HepG2 (cell line): ENCODE measurements at regions of chr6 and their contacts with region 1.

Region 1: GRCh38 chr6:25992413-25993037 is 29.9 kb downstream of the TRIM38 start:
- DNase-seq: peak; percentile 93
- ATAC-seq: peak; percentile 96
- H3K4me3 ChIP-seq: peak overlapping the region; percentile 81 to 88 (median 81)
- H3K27ac ChIP-seq: peak overlapping the region; percentile 90
- H3K4me1 ChIP-seq: peaks cover 25% of the 10 kb centered on the region
- H3K27me3 ChIP-seq: no peaks in the 10 kb centered on the region
- CTCF ChIP-seq: peak; percentile 96
- EP300 ChIP-seq: peak; percentile 50 to 79; a peak in 3 of 4 replicates
- POLR2A ChIP-seq: peak; percentile 81 to 96
- RAD21 ChIP-seq: peak; percentile 97

Region 2: DNA sequence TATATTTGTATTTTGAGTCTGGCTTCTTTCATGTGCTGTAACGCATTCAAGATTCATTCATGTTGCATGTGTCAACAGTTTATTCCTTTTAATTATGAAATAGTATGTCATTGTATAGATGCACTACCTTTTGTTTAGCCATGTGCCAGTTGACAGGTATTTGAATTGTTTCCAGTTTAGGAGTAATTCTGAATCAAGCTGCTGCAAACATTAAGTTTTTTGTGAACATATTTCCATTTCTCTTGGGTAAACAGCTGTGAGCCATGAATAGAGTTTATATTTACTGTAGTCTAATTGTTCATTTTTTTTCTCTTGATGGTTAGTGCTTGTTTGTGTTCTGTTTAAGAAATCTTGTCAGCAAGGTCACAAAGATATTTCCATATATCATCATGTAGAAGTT is 914.4 kb before region 1 on chr6:
- CTCF ChIA-PET with region 1: no interaction called
- POLR2A ChIA-PET with region 1: no interaction called
- in situ Hi-C with region 1: no loop called
- intact Hi-C with region 1: no loop called
- DNase-seq: no peak
- ATAC-seq: no peak
- H3K4me3 ChIP-seq: no peak overlapping the region
- H3K27ac ChIP-seq: no peak overlapping the region
- H3K4me1 ChIP-seq: peaks cover 14% of the 10 kb centered on the region
- H3K27me3 ChIP-seq: no peaks in the 10 kb centered on the region
- CTCF ChIP-seq: no peak
- EP300 ChIP-seq: no peak
- POLR2A ChIP-seq: no peak
- RAD21 ChIP-seq: no peak

Region 3: DNA sequence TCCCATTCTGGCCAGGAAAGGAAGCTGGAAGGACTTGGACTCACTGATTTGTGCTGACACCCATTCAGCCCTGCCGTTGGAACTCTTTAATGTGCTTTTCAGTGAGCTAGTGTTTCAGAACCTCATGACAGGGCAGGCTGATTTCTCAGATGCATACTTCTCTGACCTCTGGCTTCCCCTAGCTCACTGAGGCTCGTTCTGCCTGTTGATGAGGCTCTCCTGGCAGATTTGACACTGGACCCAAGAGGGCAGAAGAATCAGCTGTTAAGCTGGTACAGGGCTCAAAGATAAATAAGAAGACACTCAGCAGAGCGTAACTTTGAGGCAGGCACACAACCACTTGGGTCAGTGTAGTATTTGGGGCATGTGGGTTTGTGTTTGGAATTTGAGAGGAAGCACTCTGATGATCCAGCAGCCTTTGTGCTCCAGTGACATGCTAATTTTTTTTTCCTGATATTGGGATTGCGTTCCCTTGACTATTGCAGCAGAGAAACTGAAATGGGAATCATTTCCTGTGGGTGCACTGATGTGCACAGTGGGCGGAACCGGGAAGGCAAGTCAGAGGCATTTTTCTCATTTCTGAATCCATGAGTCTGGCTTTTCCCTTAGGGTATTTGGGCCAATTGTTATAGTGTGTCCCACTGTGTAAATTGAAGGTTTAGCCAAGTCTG is 633.2 kb before region 1 on chr6:
- CTCF ChIA-PET with region 1: no interaction called
- POLR2A ChIA-PET with region 1: no interaction called
- in situ Hi-C with region 1: no loop called
- intact Hi-C with region 1: no loop called
- DNase-seq: no peak
- ATAC-seq: no peak
- H3K4me3 ChIP-seq: no peak overlapping the region
- H3K27ac ChIP-seq: no peak overlapping the region
- H3K4me1 ChIP-seq: no peaks in the 10 kb centered on the region
- H3K27me3 ChIP-seq: no peaks in the 10 kb centered on the region
- CTCF ChIP-seq: no peak
- EP300 ChIP-seq: no peak
- POLR2A ChIP-seq: no peak
- RAD21 ChIP-seq: no peak

Region 4: GRCh38 chr6:25899123-25899522 is 93.4 kb before region 1 on chr6:
- CTCF ChIA-PET with region 1: no interaction called
- POLR2A ChIA-PET with region 1: interaction called, 25 read pairs
- in situ Hi-C with region 1: no loop called
- intact Hi-C with region 1: loop called (anchors 5 kb)
- DNase-seq: peak; percentile 43
- ATAC-seq: peak; percentile 45
- H3K4me3 ChIP-seq: no peak overlapping the region; a peak in 1 of 6 replicates
- H3K27ac ChIP-seq: peak overlapping the region; percentile 61
- H3K4me1 ChIP-seq: peaks cover 54% of the 10 kb centered on the region
- H3K27me3 ChIP-seq: no peaks in the 10 kb centered on the region
- CTCF ChIP-seq: no peak
- EP300 ChIP-seq: no peak
- POLR2A ChIP-seq: no peak
- RAD21 ChIP-seq: no peak

Region 5: GRCh38 chr6:25942561-25943147 is 49.9 kb before region 1 on chr6:
- CTCF ChIA-PET with region 1: no interaction called
- POLR2A ChIA-PET with region 1: interaction called, 6 read pairs
- in situ Hi-C with region 1: no loop called
- intact Hi-C with region 1: loop called (anchors 5 kb)
- DNase-seq: peak; percentile 76
- ATAC-seq: peak; percentile 93
- H3K4me3 ChIP-seq: no peak overlapping the region
- H3K27ac ChIP-seq: no peak overlapping the region
- H3K4me1 ChIP-seq: peaks cover 34% of the 10 kb centered on the region
- H3K27me3 ChIP-seq: no peaks in the 10 kb centered on the region
- CTCF ChIP-seq: peak; percentile 92
- EP300 ChIP-seq: no peak; a peak in 1 of 4 replicates
- POLR2A ChIP-seq: no peak
- RAD21 ChIP-seq: peak; percentile 89

Region 6: GRCh38 chr6:25975923-25976560 is 16.5 kb before region 1 on chr6:
- CTCF ChIA-PET with region 1: no interaction called
- POLR2A ChIA-PET with region 1: interaction called, 14 read pairs
- in situ Hi-C with region 1: no loop called
- intact Hi-C with region 1: no loop called
- DNase-seq: no peak
- ATAC-seq: no peak
- H3K4me3 ChIP-seq: no peak overlapping the region
- H3K27ac ChIP-seq: no peak overlapping the region
- H3K4me1 ChIP-seq: 0 out of 2 replicates have a peak, but pooled peaks cover 3% of the 10 kb centered on the region
- H3K27me3 ChIP-seq: no peaks in the 10 kb centered on the region
- CTCF ChIP-seq: no peak
- EP300 ChIP-seq: no peak
- POLR2A ChIP-seq: no peak
- RAD21 ChIP-seq: no peak

Region 7: GRCh38 chr6:26003102-26003694 is 10.7 kb after region 1 on chr6:
- CTCF ChIA-PET with region 1: interaction called, 11 read pairs
- POLR2A ChIA-PET with region 1: interaction called, 10 read pairs
- in situ Hi-C with region 1: no loop called
- intact Hi-C with region 1: no loop called
- DNase-seq: peak; percentile 63
- ATAC-seq: peak; percentile 82
- H3K4me3 ChIP-seq: no peak overlapping the region
- H3K27ac ChIP-seq: no peak overlapping the region
- H3K4me1 ChIP-seq: no peaks in the 10 kb centered on the region
- H3K27me3 ChIP-seq: no peaks in the 10 kb centered on the region
- CTCF ChIP-seq: peak; percentile 79
- EP300 ChIP-seq: no peak
- POLR2A ChIP-seq: no peak
- RAD21 ChIP-seq: 0 out of 2 replicates have a peak, but pooled peaks have one; percentile 30

Region 8: GRCh38 chr6:26031595-26032339 is 39.2 kb after region 1 on chr6:
- CTCF ChIA-PET with region 1: interaction called, 3 read pairs
- POLR2A ChIA-PET with region 1: interaction called, 42 read pairs
- in situ Hi-C with region 1: no loop called
- intact Hi-C with region 1: loop called (anchors 2 kb)
- DNase-seq: peak; percentile 100
- ATAC-seq: peak; percentile 79
- H3K4me3 ChIP-seq: peak overlapping the region; percentile 71 to 83 (median 82)
- H3K27ac ChIP-seq: peak overlapping the region; percentile 93
- H3K4me1 ChIP-seq: peaks cover 37% of the 10 kb centered on the region
- H3K27me3 ChIP-seq: no peaks in the 10 kb centered on the region; a peak in 1 of 5 replicates
- CTCF ChIP-seq: peak; percentile 52
- EP300 ChIP-seq: peak; percentile 40 to 80; a peak in 2 of 4 replicates
- POLR2A ChIP-seq: peak; percentile 99
- RAD21 ChIP-seq: peak; percentile 61